ENCODE measurements at regions of chr3 and their contacts with region 1.

Region 1: GRCh38 chr3:183635431-183636220 is at the start of gene KLHL24:
- DNase-seq: peak; percentile 95 to 97 (median 95)
- ATAC-seq: peak; percentile 85 to 92 (median 91)
- H3K4me3 ChIP-seq: peak within 1 kb of the TSS; percentile 59 to 100 (median 96)
- H3K27ac ChIP-seq: peak within 1 kb of the TSS; percentile 91 to 100 (median 99)
- H3K4me1 ChIP-seq: peaks cover 0 to 37% (median 30%) of the 10 kb centered on the region in 12 donors
- H3K27me3 ChIP-seq: no peaks in the 10 kb centered on the region
- CTCF ChIP-seq: no peak
- POLR2A ChIP-seq: peak; percentile 95 to 99
- total RNA-seq, gene KLHL24: 118 to 275 (median 200) TPM

Region 2: GRCh38 chr3:183099026-183099837 is 536.4 kb before region 1 on chr3 and contains the start of gene MCCC1:
- intact Hi-C with region 1: loop called in 1 of 10 experiments (anchors 10 kb)
- DNase-seq: peak; percentile 97 to 99 (median 98)
- ATAC-seq: peak; percentile 99 to 100 (median 100)
- H3K4me3 ChIP-seq: peak within 1 kb of the TSS; percentile 71 to 98 (median 86)
- H3K27ac ChIP-seq: peak within 1 kb of the TSS; percentile 69 to 92 (median 86)
- H3K4me1 ChIP-seq: peaks cover 0 to 25% (median 13%) of the 10 kb centered on the region in 12 donors
- H3K27me3 ChIP-seq: no peaks in the 10 kb centered on the region
- CTCF ChIP-seq: no peak
- POLR2A ChIP-seq: peak in 1 of 2 donors; percentile 66
- total RNA-seq, gene MCCC1: 33.0 to 58.4 (median 50.9) TPM

Region 3: DNA sequence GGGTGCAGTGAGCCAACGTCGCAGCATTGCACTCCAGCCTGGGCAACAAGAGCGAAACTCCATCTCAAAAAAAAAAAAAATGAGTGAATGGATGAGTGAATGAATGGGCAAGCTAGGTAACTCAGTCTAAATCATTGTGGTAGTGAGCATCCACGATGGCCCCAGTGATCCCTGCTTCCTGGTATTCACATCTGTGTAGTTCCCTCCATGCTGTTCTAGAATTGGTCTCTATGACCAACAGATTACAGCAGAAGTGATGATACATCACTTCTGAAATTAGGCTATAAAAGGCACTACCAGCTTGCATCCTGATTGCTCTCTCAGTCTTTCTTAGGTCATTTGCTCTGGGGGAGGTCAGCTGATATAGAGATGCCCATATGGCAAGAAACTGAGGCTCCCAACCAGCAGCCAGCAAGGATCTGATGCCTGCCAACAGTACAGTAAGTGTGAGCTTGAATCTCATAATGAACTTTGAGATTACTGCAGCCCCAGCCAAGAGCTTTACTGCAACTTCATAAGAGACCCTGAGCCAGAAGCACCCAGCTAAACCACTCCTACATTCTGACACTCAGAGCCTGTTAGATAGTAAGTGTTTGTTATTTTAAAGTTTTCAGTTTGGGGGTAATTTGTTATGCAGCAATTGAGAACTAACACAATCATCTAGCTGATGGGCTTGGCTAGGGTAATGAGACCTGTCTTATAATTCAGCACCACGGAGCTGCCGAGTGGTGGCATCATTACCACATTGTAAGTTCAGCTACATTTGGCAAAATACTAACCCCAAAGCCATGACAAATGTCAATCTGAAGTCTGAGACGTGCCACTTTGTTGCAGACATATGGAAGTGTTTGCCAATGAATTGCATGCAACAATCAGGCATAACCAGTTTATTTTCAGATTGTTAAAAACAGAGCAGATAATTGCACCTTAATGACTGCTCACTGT is 133.1 kb before region 1 on chr3:
- intact Hi-C with region 1: loop called in 1 of 10 experiments (anchors 10 kb)
- DNase-seq: peak in 1 of 5 donors; percentile 47
- ATAC-seq: peak; percentile 73 to 89 (median 81)
- H3K4me3 ChIP-seq: no peak overlapping the region
- H3K27ac ChIP-seq: no peak overlapping the region
- H3K4me1 ChIP-seq: peaks cover 0 to 4% (median 0%) of the 10 kb centered on the region in 12 donors
- H3K27me3 ChIP-seq: no peaks in the 10 kb centered on the region
- CTCF ChIP-seq: peak in 11 of 12 donors; percentile 12 to 63 (median 45)
- POLR2A ChIP-seq: no peak

Region 4: DNA sequence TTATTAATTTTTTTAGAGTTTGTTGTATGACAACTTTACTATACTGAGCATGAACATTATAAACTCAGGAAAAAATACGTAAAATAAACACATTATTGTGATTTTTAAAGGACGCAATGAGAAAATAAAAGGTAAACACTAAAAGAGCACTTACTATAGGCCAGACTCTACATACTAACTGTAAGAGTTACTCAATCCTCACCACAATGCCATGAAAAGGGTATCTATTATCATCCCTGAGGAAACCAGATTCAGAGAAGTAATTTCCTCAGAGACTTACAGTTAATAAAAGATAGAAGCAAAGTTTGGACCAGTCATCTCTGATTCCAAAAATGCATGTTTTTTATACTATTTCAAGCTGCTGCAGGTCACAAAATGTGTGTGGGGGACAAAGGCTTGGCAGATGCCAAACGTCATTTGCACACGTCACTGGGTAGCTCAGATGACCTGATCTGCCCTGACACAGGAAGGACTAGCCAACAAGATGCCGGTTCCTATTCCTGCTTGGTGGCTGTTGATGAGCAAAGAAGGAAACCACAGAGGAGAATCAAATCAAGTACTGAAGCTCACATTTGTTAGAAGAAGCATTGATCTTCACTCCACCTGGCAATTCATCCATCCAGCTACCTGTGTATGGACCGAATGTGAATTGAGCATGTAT is 122.5 kb before region 1 on chr3:
- intact Hi-C with region 1: loop called in 2 of 10 experiments (anchors 5 to 10 kb)
- DNase-seq: peak in 1 of 5 donors; percentile 40
- ATAC-seq: peak in 1 of 4 donors; percentile 77
- H3K4me3 ChIP-seq: no peak overlapping the region
- H3K27ac ChIP-seq: peak overlapping the region in 1 of 12 donors; percentile 5
- H3K4me1 ChIP-seq: peaks cover 0 to 54% (median 15%) of the 10 kb centered on the region in 12 donors
- H3K27me3 ChIP-seq: no peaks in the 10 kb centered on the region
- CTCF ChIP-seq: no peak
- POLR2A ChIP-seq: no peak

Region 5: GRCh38 chr3:183584246-183584913 is 51.2 kb before region 1 on chr3:
- intact Hi-C with region 1: loop called in 5 of 10 experiments (anchors 5 kb)
- DNase-seq: peak; percentile 54 to 76 (median 65)
- ATAC-seq: peak; percentile 65 to 86 (median 79)
- H3K4me3 ChIP-seq: no peak overlapping the region
- H3K27ac ChIP-seq: peak overlapping the region; percentile 59 to 85 (median 71)
- H3K4me1 ChIP-seq: peaks cover 3 to 69% (median 51%) of the 10 kb centered on the region in 12 donors
- H3K27me3 ChIP-seq: no peaks in the 10 kb centered on the region
- CTCF ChIP-seq: peak in 1 of 12 donors; percentile 9
- POLR2A ChIP-seq: no peak

Region 6: DNA sequence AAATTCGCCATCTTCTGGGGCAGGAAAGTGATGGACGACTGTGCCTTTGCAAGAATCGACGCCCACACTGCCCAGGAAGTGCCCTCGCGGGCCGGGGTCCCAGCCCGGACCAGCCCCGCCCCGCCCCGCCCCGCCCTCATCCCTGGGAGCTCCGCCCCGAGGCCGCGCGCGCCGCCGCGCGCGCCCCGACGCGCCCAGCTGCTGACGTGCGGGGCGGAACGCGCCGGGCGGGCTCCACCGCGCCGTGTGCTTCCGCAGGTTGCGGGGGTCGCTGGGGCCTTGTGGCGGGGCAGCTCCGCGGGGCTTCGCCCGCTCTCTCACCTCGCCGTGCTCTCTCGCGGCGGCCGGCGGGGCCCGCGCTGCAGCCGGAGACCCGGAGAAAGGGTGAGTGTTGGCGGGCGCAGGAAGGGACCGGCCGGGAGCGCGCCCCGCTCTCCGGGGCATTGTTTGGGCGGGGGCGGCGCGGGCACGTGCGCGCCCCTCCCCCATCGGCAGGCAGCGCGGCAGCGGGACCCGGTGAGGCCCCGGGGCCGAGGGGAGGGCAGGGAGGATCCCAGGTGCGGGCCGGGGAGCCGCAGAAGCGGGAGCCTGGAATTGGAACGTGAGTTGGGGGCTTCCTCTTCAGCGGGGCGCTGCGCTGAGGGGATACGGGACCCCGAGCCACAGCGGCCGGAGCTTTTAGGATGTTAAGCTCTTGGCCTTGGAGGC is 62.1 kb after region 1 on chr3 and contains the start of gene YEATS2:
- intact Hi-C with region 1: loop called in 3 of 10 experiments (anchors 2 to 10 kb)
- DNase-seq: peak; percentile 60 to 86 (median 69)
- ATAC-seq: peak; percentile 25 to 95 (median 86)
- H3K4me3 ChIP-seq: peak within 1 kb of the TSS; percentile 69 to 100 (median 97)
- H3K27ac ChIP-seq: peak within 1 kb of the TSS; percentile 69 to 98 (median 94)
- H3K4me1 ChIP-seq: peaks cover 0 to 35% (median 23%) of the 10 kb centered on the region in 12 donors
- H3K27me3 ChIP-seq: no peaks in the 10 kb centered on the region
- CTCF ChIP-seq: no peak
- POLR2A ChIP-seq: peak in 1 of 2 donors; percentile 49
- total RNA-seq, gene YEATS2: 6.9 to 21.2 (median 11.7) TPM

Measured in heart left ventricle (tissue), 16 donors.